ENCODE measurements at regions of chr11 and their contacts with region 1.

Region 1: DNA sequence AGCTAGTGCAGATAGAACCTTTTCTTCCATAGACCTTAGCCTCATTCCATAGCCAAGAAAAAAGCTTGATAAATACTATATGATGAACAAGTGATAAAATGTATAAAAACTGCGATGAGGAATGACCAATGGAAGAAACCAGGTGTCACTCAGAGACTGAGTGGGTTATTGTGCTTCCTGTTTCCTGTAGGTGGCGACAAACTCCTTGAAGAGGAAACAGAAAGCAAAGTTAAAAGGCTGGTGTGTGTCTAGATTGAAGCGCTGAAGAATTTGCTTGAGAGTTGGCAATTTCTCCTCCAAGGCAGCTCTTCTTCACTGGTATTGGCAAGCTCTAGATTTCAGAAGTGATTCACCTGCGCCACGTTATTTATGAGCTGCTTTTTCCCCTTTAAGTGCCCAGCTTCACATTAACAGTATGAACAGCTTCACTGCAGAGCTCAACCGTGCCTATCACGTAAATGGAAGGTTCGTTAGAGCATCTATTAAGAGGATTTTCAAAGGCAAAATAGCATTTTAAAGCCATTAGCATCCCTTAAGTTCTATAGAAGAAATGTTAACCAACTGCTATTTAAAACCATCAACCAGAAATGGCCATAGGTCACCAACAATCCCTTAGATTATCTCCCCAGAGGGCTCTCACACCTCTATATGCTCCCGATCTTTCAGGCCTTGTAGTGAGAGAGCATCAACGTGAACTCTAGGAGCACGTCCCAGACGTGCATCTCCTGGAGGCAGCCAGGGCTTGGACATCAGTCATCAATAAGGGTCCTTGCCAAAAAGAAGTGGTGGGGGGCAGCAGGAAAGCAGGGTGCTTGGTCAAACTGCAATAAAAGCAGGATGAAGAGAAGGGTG is 179.4 kb downstream of the CADM1 start:
- DNase-seq: peak; percentile 59 to 73
- H3K4me3 ChIP-seq: no peak overlapping the region
- H3K4me3 Mint-ChIP-seq: no peak overlapping the region
- H3K27ac Mint-ChIP-seq: peak overlapping the region; percentile 18
- H3K4me1 ChIP-seq: peaks cover 4% of the 10 kb centered on the region; the same call in 1 of the 2 replicates
- H3K4me1 Mint-ChIP-seq: peaks cover 23% of the 10 kb centered on the region
- H3K27me3 ChIP-seq: no peaks in the 10 kb centered on the region
- H3K27me3 Mint-ChIP-seq: no peaks in the 10 kb centered on the region
- CTCF ChIP-seq: peak; percentile 94 to 97

Region 2: GRCh38 chr11:114774599-114775361 is 550.0 kb before region 1 on chr11:
- CTCF ChIA-PET with region 1: no interaction called
- POLR2A ChIA-PET with region 1: no interaction called
- intact Hi-C with region 1: loop called (anchors 1 kb)
- DNase-seq: peak; percentile 77 to 81
- H3K4me3 ChIP-seq: no peak overlapping the region
- H3K4me3 Mint-ChIP-seq: no peak overlapping the region
- H3K27ac Mint-ChIP-seq: no peak overlapping the region
- H3K4me1 ChIP-seq: 0 out of 2 replicates have a peak, but pooled peaks cover 6% of the 10 kb centered on the region
- H3K4me1 Mint-ChIP-seq: peaks cover 16% of the 10 kb centered on the region
- H3K27me3 ChIP-seq: no peaks in the 10 kb centered on the region
- H3K27me3 Mint-ChIP-seq: no peaks in the 10 kb centered on the region
- CTCF ChIP-seq: peak; percentile 94 to 95

Region 3: DNA sequence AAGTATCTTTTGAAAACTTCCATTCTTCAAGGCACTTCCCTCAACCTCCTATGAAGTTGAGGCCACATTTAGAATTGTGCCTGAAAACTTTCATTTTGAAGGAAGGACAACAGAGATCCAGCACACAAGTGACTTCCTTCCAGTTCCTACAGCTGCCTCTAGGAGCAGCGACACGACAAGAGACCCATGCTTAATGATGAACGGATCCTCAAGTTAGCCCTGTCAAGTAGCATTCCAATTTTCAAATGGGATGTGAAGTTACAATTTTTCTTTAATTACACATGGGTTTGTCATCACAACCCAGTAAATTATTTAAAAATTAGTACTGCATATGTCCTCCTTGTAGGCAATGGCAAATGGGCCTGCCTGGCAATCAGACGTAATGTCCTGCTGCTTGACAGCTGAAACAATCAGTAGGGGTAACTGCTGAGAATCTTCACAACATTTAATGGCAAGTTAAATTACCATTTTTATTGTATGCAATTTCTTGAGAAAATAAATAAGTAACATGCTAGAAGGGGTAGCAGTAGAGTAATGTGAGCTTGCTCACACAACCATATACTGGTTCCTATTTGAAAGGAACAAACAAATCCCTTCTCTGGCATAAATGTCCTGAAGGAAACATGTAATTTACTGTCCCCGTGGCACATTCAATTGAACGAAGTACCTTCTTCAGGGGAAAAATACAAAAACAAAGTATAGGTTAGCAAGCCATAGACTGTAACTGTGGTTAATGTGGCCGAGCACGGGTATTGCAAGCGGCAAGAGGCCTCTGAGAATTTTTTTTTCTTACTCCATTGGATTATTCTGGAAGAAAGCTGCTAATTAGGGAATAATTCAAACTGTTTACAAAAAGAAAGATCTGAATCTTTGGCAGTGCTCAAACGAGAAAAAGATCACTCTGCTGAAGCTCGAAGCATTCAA is 108.9 kb before region 1 on chr11:
- CTCF ChIA-PET with region 1: no interaction called
- POLR2A ChIA-PET with region 1: no interaction called
- intact Hi-C with region 1: loop called (anchors 5 kb)
- DNase-seq: peak; percentile 51 to 52
- H3K4me3 ChIP-seq: no peak overlapping the region
- H3K4me3 Mint-ChIP-seq: no peak overlapping the region
- H3K27ac Mint-ChIP-seq: peak overlapping the region; percentile 55
- H3K4me1 ChIP-seq: no peaks in the 10 kb centered on the region
- H3K4me1 Mint-ChIP-seq: no peaks in the 10 kb centered on the region
- H3K27me3 ChIP-seq: no peaks in the 10 kb centered on the region
- H3K27me3 Mint-ChIP-seq: no peaks in the 10 kb centered on the region
- CTCF ChIP-seq: peak; percentile 50 to 85

Region 4: DNA sequence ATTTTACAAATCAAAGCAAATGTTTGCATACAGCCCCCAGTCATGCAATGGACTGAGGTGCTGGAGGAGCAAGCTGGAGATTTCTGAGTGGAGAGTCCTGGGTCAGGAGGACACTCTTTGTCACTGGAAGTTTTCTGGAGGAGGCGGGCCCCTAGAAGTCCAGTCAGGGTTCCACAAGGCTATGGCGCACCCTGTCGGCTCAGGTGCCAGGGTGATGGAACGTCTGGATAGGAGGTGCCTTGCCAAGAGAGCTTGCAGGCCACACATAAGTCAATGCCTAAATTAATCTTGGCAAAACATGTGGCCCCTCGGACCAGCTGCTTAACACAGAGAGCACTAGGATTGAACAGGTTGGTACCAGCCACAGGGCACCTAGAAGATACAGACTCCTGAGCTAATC is 354.1 kb after region 1 on chr11:
- CTCF ChIA-PET with region 1: interaction called, 3 read pairs
- POLR2A ChIA-PET with region 1: no interaction called
- intact Hi-C with region 1: loop called (anchors 2 kb)
- DNase-seq: peak; percentile 58 to 62
- H3K4me3 ChIP-seq: no peak overlapping the region
- H3K4me3 Mint-ChIP-seq: no peak overlapping the region
- H3K27ac Mint-ChIP-seq: no peak overlapping the region
- H3K4me1 ChIP-seq: no peaks in the 10 kb centered on the region
- H3K4me1 Mint-ChIP-seq: peaks cover 6% of the 10 kb centered on the region
- H3K27me3 ChIP-seq: no peaks in the 10 kb centered on the region
- H3K27me3 Mint-ChIP-seq: peaks cover 7% of the 10 kb centered on the region
- CTCF ChIP-seq: peak; percentile 42 to 54

Region 5: DNA sequence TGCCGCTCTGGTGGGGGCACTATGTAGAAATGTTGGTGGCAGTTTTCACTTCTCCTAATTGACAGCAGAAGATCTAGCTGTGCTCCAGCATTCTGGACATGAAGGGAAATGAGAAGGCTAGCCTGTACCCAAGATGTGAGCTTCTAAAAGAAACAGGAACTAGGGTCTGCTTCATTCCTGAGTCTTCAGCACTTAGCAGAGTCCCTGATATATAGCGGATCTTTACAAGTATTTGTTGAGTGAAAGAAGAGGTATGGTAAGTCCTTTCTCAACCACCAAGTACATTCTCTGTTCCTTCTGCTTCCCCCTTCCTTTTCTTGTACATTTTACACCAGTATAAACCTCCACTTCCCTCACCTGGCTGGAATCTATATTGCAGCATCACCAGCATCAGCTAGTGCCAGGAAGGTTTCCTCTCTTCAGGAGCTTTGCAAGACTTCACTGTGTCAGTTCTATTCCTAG is 587.7 kb after region 1 on chr11:
- CTCF ChIA-PET with region 1: no interaction called
- POLR2A ChIA-PET with region 1: no interaction called
- intact Hi-C with region 1: loop called (anchors 1 kb)
- DNase-seq: peak in 1 of 2 experiments; percentile 49
- H3K4me3 ChIP-seq: no peak overlapping the region
- H3K4me3 Mint-ChIP-seq: no peak overlapping the region
- H3K27ac Mint-ChIP-seq: no peak overlapping the region
- H3K4me1 ChIP-seq: no peaks in the 10 kb centered on the region
- H3K4me1 Mint-ChIP-seq: no peaks in the 10 kb centered on the region
- H3K27me3 ChIP-seq: no peaks in the 10 kb centered on the region
- H3K27me3 Mint-ChIP-seq: peaks cover 7% of the 10 kb centered on the region
- CTCF ChIP-seq: peak; percentile 62 to 67

Region 6: DNA sequence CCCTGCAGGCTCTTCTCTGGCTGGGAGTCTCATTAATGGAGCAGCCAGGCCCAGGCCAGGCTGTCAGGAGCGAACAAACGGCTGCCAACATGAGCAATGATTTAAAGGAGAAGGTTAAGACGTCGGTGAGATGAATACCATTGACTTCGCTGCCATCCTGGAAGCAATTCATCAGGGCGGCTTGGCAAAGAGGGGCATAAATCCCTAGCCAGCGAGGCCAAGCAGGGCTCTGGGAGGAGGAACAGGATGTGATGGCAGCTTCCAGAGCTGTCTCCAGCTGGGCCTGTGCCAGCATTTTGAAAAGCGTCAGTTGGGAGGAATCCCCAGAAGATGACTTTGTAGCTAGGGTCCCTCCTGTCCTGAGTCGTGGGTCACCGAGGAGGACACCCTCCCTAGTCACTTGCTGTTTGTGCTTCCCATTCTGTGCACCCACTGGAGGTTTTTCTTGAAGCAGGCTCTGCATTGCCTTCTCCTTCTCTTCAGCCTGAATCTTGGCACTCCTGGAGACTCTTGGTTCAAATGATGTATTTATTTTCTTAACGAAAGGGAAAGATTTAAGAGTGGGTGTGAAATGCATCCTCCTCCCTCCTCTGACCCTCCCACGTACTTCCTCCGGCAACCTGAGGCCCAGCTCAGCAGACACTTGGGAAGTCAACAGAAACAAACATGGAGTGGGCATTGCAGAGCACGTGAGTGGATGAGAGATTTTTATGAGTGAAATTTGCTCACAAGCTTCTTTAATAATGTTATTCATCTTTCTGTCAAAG is 655.7 kb after region 1 on chr11:
- CTCF ChIA-PET with region 1: no interaction called
- POLR2A ChIA-PET with region 1: no interaction called
- intact Hi-C with region 1: loop called (anchors 10 kb)
- DNase-seq: no peak
- H3K4me3 ChIP-seq: no peak overlapping the region
- H3K4me3 Mint-ChIP-seq: no peak overlapping the region
- H3K27ac Mint-ChIP-seq: no peak overlapping the region
- H3K4me1 ChIP-seq: no peaks in the 10 kb centered on the region
- H3K4me1 Mint-ChIP-seq: no peaks in the 10 kb centered on the region
- H3K27me3 ChIP-seq: peaks cover 2% of the 10 kb centered on the region; the same call in 1 of the 2 replicates
- H3K27me3 Mint-ChIP-seq: peaks cover 14% of the 10 kb centered on the region
- CTCF ChIP-seq: no peak

Region 7: DNA sequence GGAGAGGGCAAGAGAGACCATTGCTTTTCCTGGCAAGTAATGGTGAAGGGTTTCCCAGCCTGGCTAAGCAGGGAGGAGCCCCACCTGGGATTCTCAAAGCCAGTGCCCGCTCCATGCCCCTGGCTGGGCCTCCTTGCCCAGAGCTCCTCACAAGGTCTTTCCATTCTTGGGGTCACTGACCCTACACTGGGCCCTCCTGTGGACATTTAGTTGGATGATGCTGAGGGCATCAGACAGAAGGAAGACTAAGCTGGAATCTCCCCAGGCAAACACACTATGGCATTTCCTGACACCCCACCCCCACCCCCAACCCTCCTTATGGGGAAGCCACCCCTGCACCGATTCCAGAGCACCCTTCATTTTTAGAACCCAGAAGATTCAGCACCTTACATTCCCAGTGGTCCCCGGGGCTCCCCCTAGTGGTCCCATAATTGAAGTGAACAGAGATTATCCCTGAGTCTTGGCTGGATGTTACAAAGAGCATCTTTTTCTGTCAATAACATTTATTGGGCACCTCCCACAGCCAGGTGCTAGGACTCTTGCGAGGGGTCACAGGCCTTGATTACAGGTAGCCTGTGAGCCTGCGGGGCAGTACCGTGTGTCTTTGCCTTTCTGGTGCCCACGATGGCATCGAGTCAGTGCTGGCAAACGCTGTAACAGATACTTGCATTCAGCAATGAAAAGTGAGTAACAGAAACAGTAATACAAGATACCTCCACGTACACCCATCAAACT is 899.5 kb after region 1 on chr11:
- CTCF ChIA-PET with region 1: no interaction called
- POLR2A ChIA-PET with region 1: no interaction called
- intact Hi-C with region 1: loop called (anchors 1 kb)
- DNase-seq: peak; percentile 72 to 82
- H3K4me3 ChIP-seq: no peak overlapping the region
- H3K4me3 Mint-ChIP-seq: no peak overlapping the region
- H3K27ac Mint-ChIP-seq: no peak overlapping the region
- H3K4me1 ChIP-seq: no peaks in the 10 kb centered on the region
- H3K4me1 Mint-ChIP-seq: peaks cover 8% of the 10 kb centered on the region
- H3K27me3 ChIP-seq: no peaks in the 10 kb centered on the region; the same call in 1 of the 2 replicates
- H3K27me3 Mint-ChIP-seq: peaks cover 2% of the 10 kb centered on the region
- CTCF ChIP-seq: peak; percentile 90 to 96